Upper lobe of right lung (tissue), 1 donor: ENCODE measurements at regions of chr2 and their contacts with region 1.

Region 1: DNA sequence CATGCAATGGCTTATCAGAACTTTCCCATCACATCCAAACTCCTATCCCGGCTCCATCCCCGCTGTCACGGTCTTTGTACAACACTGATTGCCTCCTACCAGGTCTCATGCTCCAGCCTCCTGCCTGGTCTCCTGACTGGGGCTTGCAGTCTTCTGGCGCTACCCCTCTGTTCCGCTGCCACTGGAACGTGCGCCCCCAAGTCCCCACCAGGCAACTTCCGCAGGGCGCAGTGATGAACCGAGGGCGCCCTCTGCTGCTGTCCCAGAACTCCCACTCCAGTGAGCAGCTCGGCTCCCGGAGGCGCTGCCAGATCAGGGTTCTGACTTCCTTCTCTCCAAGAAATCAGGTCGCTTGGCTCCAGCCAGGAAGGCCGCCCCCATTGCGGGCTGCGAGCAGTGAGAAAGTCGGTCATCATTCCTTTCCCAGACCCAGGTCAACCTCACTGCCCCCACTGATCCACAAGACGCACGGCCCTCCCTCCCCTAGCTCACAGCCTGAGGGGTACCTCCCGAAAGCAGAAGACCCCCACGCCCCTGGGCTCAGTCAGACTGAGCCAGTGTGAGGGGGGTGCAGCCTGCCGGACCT is 43.9 kb upstream of the RAB11FIP5 start:
- DNase-seq: peak; percentile 77
- ATAC-seq: peak; percentile 87
- H3K4me3 ChIP-seq: no peak overlapping the region
- H3K27ac ChIP-seq: no peak overlapping the region
- H3K4me1 ChIP-seq: peaks cover 4% of the 10 kb centered on the region
- H3K27me3 ChIP-seq: peaks cover 18% of the 10 kb centered on the region
- CTCF ChIP-seq: peak; percentile 66

Region 2: GRCh38 chr2:73085691-73086360 is 70.8 kb before region 1 on chr2:
- intact Hi-C with region 1: loop called (anchors 5 kb)
- DNase-seq: peak; percentile 91
- ATAC-seq: peak; percentile 82
- H3K4me3 ChIP-seq: no peak overlapping the region
- H3K27ac ChIP-seq: no peak overlapping the region
- H3K4me1 ChIP-seq: no peaks in the 10 kb centered on the region
- H3K27me3 ChIP-seq: no peaks in the 10 kb centered on the region
- CTCF ChIP-seq: peak; percentile 96